CD4-positive, alpha-beta T cell (primary cell): ENCODE measurements at regions of chr10 and their contacts with region 1.

Region 1: GRCh38 chr10:35336084-35336831 is at the start of gene CCNY:
- DNase-seq: peak; percentile 62 to 87 (median 75)
- ATAC-seq: peak; percentile 85
- H3K4me3 ChIP-seq: peak within 1 kb of the TSS; percentile 80
- H3K4me3 Mint-ChIP-seq: peak within 1 kb of the TSS; percentile 93
- H3K27ac ChIP-seq: peak within 1 kb of the TSS; percentile 41 to 54
- H3K27ac Mint-ChIP-seq: peak within 1 kb of the TSS; percentile 87
- H3K4me1 ChIP-seq: peaks cover 44% of the 10 kb centered on the region
- H3K4me1 Mint-ChIP-seq: peaks cover 79% of the 10 kb centered on the region
- H3K27me3 ChIP-seq: no peaks in the 10 kb centered on the region
- H3K27me3 Mint-ChIP-seq: no peaks in the 10 kb centered on the region
- CTCF ChIP-seq: no peak
- total RNA-seq, gene CCNY: 64.9 to 66.9 TPM

Region 2: DNA sequence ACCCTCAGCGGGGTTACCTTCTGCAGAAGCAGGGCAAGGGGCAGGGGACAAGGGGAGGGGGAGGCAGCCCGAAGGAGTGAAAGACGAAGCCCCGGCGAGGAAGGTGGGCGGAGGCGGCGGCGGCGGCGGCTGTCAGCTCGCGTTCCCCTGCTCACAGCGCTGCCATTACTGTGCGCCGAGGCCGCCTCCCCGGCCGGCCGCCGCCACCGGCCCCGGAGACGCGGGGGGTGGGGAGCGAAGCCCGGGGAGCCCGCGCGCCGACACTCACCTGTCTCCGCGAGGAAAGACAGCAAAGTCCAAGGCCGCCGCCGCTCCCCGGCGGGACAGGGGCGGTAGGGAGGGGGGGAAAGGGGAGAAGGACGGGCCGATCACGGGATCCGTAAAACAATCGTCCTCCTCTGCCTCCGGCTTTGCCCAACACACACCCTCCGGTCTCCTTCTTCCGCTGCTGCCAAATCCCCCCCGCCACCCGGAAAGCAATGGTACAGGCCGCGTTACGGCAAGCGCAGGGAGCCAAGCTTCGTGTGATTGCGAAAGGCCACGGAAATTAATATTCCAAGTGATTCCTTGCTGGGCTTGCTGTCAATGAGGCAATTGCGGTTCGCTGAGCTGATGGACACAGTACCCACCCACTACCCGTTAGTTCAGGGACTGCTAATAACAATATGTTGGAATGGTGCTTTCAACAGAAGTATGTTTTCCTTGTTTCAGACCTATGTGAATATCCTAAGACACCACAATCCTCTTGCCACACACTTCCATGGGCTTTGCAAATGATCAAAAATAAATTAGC is 245.9 kb before region 1 on chr10 and contains the start of gene CUL2:
- CTCF ChIA-PET with region 1: no interaction called
- POLR2A ChIA-PET with region 1: no interaction called
- intact Hi-C with region 1: loop called in 1 of 2 experiments (anchors 2 kb)
- DNase-seq: peak; percentile 86 to 96 (median 90)
- ATAC-seq: peak; percentile 92
- H3K4me3 ChIP-seq: peak within 1 kb of the TSS; percentile 91
- H3K4me3 Mint-ChIP-seq: peak within 1 kb of the TSS; percentile 98
- H3K27ac ChIP-seq: peak within 1 kb of the TSS; percentile 94 to 96
- H3K27ac Mint-ChIP-seq: peak within 1 kb of the TSS; percentile 93
- H3K4me1 ChIP-seq: peaks cover 44% of the 10 kb centered on the region
- H3K4me1 Mint-ChIP-seq: peaks cover 56% of the 10 kb centered on the region
- H3K27me3 ChIP-seq: no peaks in the 10 kb centered on the region
- H3K27me3 Mint-ChIP-seq: peaks cover 7% of the 10 kb centered on the region
- CTCF ChIP-seq: no peak
- total RNA-seq, gene CUL2: 30.1 to 32.4 TPM

Region 3: DNA sequence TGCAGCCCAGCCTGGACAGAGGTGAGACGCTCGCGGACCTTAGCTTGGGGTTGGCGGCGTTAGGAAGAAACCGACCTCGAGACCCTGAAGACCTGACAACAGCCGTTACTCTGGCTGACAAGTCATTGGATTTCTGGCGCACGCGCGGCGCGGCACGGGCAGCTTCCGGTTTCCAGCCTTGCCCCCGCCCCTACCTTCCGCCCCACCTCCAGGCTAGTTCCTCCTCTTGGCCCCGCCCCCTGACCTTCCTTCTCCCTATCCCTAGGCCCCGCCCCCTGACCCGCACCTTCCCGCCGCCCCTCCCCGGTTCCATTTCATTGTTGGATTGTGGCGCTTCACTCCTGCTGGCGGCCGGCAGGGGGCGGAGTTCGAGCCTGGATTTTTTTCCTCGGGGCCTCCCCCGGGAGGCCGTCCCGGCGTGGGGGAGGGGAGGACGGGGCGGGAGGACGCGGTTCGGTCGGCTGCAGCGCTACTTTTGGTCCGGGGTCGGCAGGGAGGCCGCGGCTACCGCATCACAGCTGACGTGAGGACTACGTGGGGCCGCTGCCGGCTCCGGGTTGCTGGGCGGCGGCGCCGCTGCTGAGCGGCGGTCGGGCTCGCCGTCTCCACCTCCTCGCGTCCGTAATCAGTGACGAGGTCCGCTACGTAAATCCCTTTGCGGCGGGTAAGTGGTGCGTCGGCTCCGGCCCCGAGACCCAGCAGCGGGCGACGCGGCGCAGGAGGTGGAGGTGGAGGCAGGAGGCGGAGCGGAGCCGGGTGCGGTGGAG is 209.5 kb before region 1 on chr10 and contains the start of gene CREM:
- CTCF ChIA-PET with region 1: no interaction called
- POLR2A ChIA-PET with region 1: interaction called, 4 read pairs
- intact Hi-C with region 1: loop called (anchors 2 to 5 kb)
- DNase-seq: peak; percentile 97 to 100 (median 100)
- ATAC-seq: peak; percentile 80
- H3K4me3 ChIP-seq: peak within 1 kb of the TSS; percentile 62
- H3K4me3 Mint-ChIP-seq: peak within 1 kb of the TSS; percentile 98
- H3K27ac ChIP-seq: peak within 1 kb of the TSS; percentile 96 to 99
- H3K27ac Mint-ChIP-seq: peak within 1 kb of the TSS; percentile 93
- H3K4me1 ChIP-seq: peaks cover 25% of the 10 kb centered on the region
- H3K4me1 Mint-ChIP-seq: peaks cover 47% of the 10 kb centered on the region
- H3K27me3 ChIP-seq: no peaks in the 10 kb centered on the region
- H3K27me3 Mint-ChIP-seq: no peaks in the 10 kb centered on the region
- CTCF ChIP-seq: peak; percentile 86
- total RNA-seq, gene CREM: 65.7 to 67.0 TPM

Region 4: DNA sequence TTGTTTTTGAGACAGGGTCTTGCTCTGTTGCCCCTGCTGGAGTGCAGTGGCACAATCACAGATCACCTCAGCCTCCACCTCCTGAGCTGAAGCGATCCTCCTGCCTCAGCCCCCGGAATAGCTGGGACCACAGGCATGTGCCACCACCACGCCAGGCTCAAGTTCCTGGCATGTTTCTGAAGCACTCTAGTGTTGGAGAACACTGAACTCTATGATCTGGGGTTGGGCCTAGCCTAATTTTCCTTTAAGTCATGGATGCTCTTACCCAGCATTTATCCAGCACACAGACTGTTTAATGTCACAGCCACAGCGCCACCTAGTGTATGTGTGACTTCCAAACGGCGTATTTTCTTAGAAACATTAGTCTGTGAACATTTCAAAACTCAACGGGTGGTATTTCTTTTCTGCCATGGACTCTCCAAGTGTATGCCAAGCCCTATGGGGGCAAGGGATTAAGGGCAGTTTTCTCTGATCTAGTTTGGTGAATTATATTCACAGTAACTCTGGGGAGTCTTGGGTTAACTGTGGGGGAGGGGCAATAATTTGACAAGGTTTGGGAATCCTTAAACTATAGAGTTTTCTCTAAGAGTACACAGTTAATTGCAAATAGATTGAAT is 117.8 kb before region 1 on chr10:
- CTCF ChIA-PET with region 1: no interaction called
- POLR2A ChIA-PET with region 1: no interaction called
- intact Hi-C with region 1: loop called in 1 of 2 experiments (anchors 5 kb)
- DNase-seq: peak; percentile 61 to 92 (median 80)
- ATAC-seq: peak; percentile 90
- H3K4me3 ChIP-seq: no peak overlapping the region
- H3K4me3 Mint-ChIP-seq: no peak overlapping the region
- H3K27ac ChIP-seq: no peak overlapping the region
- H3K27ac Mint-ChIP-seq: no peak overlapping the region
- H3K4me1 ChIP-seq: peaks cover 3% of the 10 kb centered on the region
- H3K4me1 Mint-ChIP-seq: peaks cover 7% of the 10 kb centered on the region
- H3K27me3 ChIP-seq: no peaks in the 10 kb centered on the region
- H3K27me3 Mint-ChIP-seq: peaks cover 12% of the 10 kb centered on the region
- CTCF ChIP-seq: peak; percentile 94

Region 5: DNA sequence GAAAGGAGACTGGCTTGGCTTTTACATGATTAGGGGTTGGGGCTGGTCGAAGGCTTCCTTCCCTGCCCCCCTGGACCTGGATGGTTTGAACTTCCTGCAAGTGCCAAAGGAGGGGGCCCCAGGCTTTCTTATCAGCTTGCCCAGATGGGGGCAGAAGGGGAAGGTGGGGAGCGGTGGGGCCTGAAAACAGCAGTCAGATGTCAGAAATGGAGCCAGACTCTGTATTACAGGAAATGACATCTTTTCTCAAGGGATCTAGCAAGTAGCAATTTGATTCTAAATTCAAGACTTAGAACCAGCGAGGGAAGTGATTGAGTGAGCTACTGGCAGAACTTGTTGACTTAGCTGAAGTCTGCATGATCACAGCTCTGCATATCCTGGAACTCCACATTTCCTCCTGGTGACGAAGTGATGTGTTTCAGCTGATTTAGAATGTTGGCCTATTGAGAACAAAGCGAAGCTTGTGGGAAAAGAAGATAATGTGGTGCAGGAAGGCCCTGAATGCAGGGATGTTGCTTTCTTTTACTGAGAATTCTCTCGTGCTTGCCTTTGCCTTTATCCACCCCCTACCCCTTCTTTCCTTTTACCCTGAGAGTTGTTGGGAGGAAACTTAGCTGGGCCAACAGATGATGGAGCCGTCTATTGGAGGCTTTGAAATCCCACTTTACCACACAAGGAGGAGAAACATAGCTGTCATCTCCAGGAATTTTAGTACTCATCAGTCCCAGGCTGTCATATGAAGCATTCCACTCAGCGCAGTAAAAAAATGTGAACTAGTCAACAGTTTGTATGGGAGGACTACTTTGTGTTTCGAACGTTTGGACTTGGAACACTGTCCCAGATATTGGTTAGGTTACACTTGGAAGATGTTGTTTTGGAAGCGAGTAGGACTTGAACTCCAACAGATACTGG is 43.2 kb after region 1 on chr10:
- CTCF ChIA-PET with region 1: no interaction called
- POLR2A ChIA-PET with region 1: no interaction called
- intact Hi-C with region 1: loop called in 1 of 2 experiments (anchors 5 kb)
- DNase-seq: peak in 7 of 14 experiments; percentile 6 to 39 (median 20)
- ATAC-seq: peak; percentile 76
- H3K4me3 ChIP-seq: no peak overlapping the region
- H3K4me3 Mint-ChIP-seq: peak overlapping the region; percentile 53
- H3K27ac ChIP-seq: no peak overlapping the region
- H3K27ac Mint-ChIP-seq: peak overlapping the region; percentile 71
- H3K4me1 ChIP-seq: peaks cover 20% of the 10 kb centered on the region
- H3K4me1 Mint-ChIP-seq: peaks cover 91% of the 10 kb centered on the region
- H3K27me3 ChIP-seq: no peaks in the 10 kb centered on the region
- H3K27me3 Mint-ChIP-seq: no peaks in the 10 kb centered on the region
- CTCF ChIP-seq: no peak

Region 6: GRCh38 chr10:35447693-35448407 is 111.6 kb after region 1 on chr10:
- CTCF ChIA-PET with region 1: no interaction called
- POLR2A ChIA-PET with region 1: no interaction called
- intact Hi-C with region 1: loop called in 1 of 2 experiments (anchors 5 kb)
- DNase-seq: peak in 11 of 14 experiments; percentile 12 to 75 (median 25)
- ATAC-seq: peak; percentile 77
- H3K4me3 ChIP-seq: peak overlapping the region; percentile 15
- H3K4me3 Mint-ChIP-seq: peak overlapping the region; percentile 52
- H3K27ac ChIP-seq: peak overlapping the region; percentile 64 to 81
- H3K27ac Mint-ChIP-seq: peak overlapping the region; percentile 93
- H3K4me1 ChIP-seq: peaks cover 58% of the 10 kb centered on the region
- H3K4me1 Mint-ChIP-seq: peaks cover 80% of the 10 kb centered on the region
- H3K27me3 ChIP-seq: no peaks in the 10 kb centered on the region
- H3K27me3 Mint-ChIP-seq: no peaks in the 10 kb centered on the region
- CTCF ChIP-seq: no peak

Region 7: GRCh38 chr10:35642027-35642792 is 306.0 kb after region 1 on chr10 and contains the start of gene FZD8:
- CTCF ChIA-PET with region 1: no interaction called
- POLR2A ChIA-PET with region 1: no interaction called
- intact Hi-C with region 1: loop called in 1 of 2 experiments (anchors 5 kb)
- DNase-seq: peak; percentile 30 to 84 (median 59)
- ATAC-seq: peak; percentile 85
- H3K4me3 ChIP-seq: peak within 1 kb of the TSS; percentile 65
- H3K4me3 Mint-ChIP-seq: peak within 1 kb of the TSS; percentile 94
- H3K27ac ChIP-seq: no peak within 1 kb of the TSS
- H3K27ac Mint-ChIP-seq: peak within 1 kb of the TSS; percentile 33
- H3K4me1 ChIP-seq: peaks cover 31% of the 10 kb centered on the region
- H3K4me1 Mint-ChIP-seq: peaks cover 39% of the 10 kb centered on the region
- H3K27me3 ChIP-seq: peaks cover 15 to 17% of the 10 kb centered on the region in 2 experiments
- H3K27me3 Mint-ChIP-seq: peaks cover 58% of the 10 kb centered on the region
- CTCF ChIP-seq: no peak
- total RNA-seq, gene FZD8: 2.1 to 2.2 TPM